ENCODE measurements at regions of chr4 and their contacts with region 1.

Region 1: GRCh38 chr4:38132107-38132673 is 172.0 kb downstream of the PTTG2 start:
- DNase-seq: peak; percentile 85
- H3K4me3 Mint-ChIP-seq: peak overlapping the region; percentile 56
- H3K27ac Mint-ChIP-seq: peak overlapping the region; percentile 96
- H3K4me1 Mint-ChIP-seq: peaks cover 76% of the 10 kb centered on the region
- H3K27me3 Mint-ChIP-seq: peaks cover 1% of the 10 kb centered on the region

Region 2: GRCh38 chr4:37715889-37716402 is 416.2 kb before region 1 on chr4:
- CTCF ChIA-PET with region 1: interaction called, 3 read pairs
- POLR2A ChIA-PET with region 1: no interaction called
- intact Hi-C with region 1: loop called (anchors 5 kb)
- DNase-seq: peak; percentile 57
- H3K4me3 Mint-ChIP-seq: no peak overlapping the region
- H3K27ac Mint-ChIP-seq: peak overlapping the region; percentile 81
- H3K4me1 Mint-ChIP-seq: peaks cover 20% of the 10 kb centered on the region
- H3K27me3 Mint-ChIP-seq: peaks cover 10% of the 10 kb centered on the region

Region 3: GRCh38 chr4:38069271-38069760 is 62.9 kb before region 1 on chr4:
- CTCF ChIA-PET with region 1: interaction called, 5 read pairs
- POLR2A ChIA-PET with region 1: interaction called, 9 read pairs
- intact Hi-C with region 1: loop called (anchors 1 kb)
- DNase-seq: peak; percentile 55
- H3K4me3 Mint-ChIP-seq: no peak overlapping the region
- H3K27ac Mint-ChIP-seq: peak overlapping the region; percentile 52
- H3K4me1 Mint-ChIP-seq: peaks cover 27% of the 10 kb centered on the region
- H3K27me3 Mint-ChIP-seq: no peaks in the 10 kb centered on the region

Region 4: DNA sequence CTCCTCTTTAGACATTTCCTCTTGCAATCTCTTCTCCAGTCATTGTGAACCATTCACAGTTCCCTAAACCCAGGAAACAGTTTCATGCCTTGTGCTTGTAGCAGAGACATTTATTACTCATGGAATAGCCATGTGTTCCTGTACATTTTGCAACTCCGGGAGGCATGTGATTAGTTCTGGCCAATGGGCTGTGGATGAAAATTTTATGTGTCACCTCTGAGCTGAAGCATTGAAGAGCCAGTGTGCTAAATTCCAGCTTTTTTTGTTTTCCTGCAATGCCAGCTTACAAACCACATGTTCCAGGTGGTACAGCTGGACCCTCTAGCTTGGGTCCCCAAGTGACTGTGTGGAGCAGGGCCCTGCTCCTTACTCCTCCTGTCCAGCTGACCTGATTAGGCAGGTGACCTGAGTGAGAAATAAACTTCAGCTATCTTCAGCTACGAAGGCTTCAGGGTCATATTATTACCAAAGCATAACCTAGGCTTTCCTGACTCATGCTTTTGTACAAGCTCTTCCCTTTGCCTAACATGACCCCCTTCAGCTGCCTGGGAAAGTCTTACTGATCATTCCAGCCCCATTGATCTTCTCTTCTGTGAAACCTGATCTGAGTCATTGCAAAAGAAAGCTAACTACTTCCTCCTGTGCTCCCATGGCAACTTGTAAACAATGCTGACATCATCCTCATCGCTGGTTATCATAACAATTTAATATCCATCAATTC is 28.5 kb after region 1 on chr4:
- CTCF ChIA-PET with region 1: interaction called, 23 read pairs
- POLR2A ChIA-PET with region 1: interaction called, 54 read pairs
- intact Hi-C with region 1: loop called (anchors 1 kb)
- DNase-seq: peak; percentile 75
- H3K4me3 Mint-ChIP-seq: peak overlapping the region; percentile 10
- H3K27ac Mint-ChIP-seq: peak overlapping the region; percentile 68
- H3K4me1 Mint-ChIP-seq: peaks cover 74% of the 10 kb centered on the region
- H3K27me3 Mint-ChIP-seq: no peaks in the 10 kb centered on the region

Region 5: GRCh38 chr4:38523524-38524448 is 391.6 kb after region 1 on chr4:
- CTCF ChIA-PET with region 1: no interaction called
- POLR2A ChIA-PET with region 1: interaction called, 4 read pairs
- intact Hi-C with region 1: loop called (anchors 1 kb)
- DNase-seq: peak; percentile 87
- H3K4me3 Mint-ChIP-seq: peak overlapping the region; percentile 54
- H3K27ac Mint-ChIP-seq: peak overlapping the region; percentile 68
- H3K4me1 Mint-ChIP-seq: peaks cover 30% of the 10 kb centered on the region
- H3K27me3 Mint-ChIP-seq: peaks cover 20% of the 10 kb centered on the region

Region 6: DNA sequence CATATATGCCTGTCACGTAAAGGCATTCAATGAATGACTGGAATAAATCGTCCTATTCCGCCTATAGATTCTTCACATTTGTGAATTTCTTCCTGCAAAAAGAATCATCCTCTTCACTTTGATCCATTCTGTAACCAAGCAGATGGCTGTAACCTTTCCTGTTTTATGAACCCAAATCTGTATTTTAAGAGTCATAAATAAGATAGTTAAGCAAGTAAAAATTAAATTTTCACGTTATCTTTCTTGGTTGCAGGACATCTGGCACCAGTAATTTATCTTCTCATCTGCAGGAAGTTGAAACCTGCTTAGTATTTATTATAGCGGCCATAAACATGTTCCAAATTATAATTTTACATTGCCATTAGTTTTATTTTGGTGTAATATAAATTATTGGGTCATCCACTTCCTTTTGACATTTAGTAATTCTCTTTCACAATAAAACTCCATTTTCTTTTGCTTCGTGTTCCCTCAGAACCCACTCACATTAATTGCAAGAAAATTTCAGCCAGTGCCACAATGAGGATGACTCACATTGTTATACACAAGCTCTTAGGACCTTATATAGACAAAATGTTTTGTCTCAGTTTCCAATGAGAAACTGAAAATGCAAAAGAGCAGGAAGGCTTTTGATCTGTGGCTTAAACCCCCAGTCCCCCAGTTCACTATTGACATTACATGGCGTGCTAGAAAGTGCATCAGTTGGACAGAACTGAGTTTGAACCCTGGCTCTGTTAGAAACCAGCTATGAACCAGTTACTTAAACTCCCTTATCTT is 848.9 kb after region 1 on chr4:
- CTCF ChIA-PET with region 1: no interaction called
- POLR2A ChIA-PET with region 1: interaction called, 3 read pairs
- intact Hi-C with region 1: loop called (anchors 1 kb)
- DNase-seq: peak; percentile 56
- H3K4me3 Mint-ChIP-seq: peak overlapping the region; percentile 36
- H3K27ac Mint-ChIP-seq: peak overlapping the region; percentile 93
- H3K4me1 Mint-ChIP-seq: peaks cover 64% of the 10 kb centered on the region
- H3K27me3 Mint-ChIP-seq: no peaks in the 10 kb centered on the region

Measured in activated CD4-positive, alpha-beta memory T cell treated with anti-CD3 and anti-CD28 coated beads for 36 hours (primary cell).